ENCODE measurements at regions of chr11 and their contacts with region 1.

Region 1: GRCh38 chr11:58776891-58777710 is 45.4 kb upstream of the GLYAT start:
- DNase-seq: no peak
- H3K4me3 ChIP-seq: no peak overlapping the region
- H3K27ac ChIP-seq: no peak overlapping the region
- H3K4me1 ChIP-seq: no peaks in the 10 kb centered on the region
- H3K27me3 ChIP-seq: no peaks in the 10 kb centered on the region
- CTCF ChIP-seq: no peak
- EP300 ChIP-seq: no peak
- POLR2A ChIP-seq: no peak

Region 2: DNA sequence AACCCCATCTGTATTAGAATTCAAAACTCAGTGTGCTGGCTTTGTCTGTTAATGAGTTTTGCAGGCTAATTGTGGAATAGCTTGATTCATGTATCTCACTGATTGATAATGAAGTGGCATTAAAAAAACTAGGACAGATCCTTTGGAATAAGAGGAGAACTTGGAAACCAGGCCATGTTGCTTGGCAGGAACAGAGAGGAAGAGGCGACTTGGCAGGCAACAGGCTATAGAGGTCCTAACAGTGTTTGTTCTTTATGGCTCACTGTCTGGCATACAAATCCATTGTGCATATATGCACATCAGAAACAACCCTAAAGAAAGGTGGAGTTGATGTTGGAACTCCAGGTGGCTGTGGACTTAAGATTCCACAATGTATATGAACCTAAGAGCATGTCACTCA is 634.3 kb before region 1 on chr11:
- intact Hi-C with region 1: loop called in 1 of 4 experiments (anchors 5 kb)
- DNase-seq: no peak
- H3K4me3 ChIP-seq: no peak overlapping the region
- H3K27ac ChIP-seq: no peak overlapping the region
- H3K4me1 ChIP-seq: no peaks in the 10 kb centered on the region
- H3K27me3 ChIP-seq: no peaks in the 10 kb centered on the region
- CTCF ChIP-seq: no peak
- EP300 ChIP-seq: no peak
- POLR2A ChIP-seq: no peak

Measured in ovary (tissue), 10 donors.